ENCODE measurements at regions of chr11 and their contacts with region 1.

Region 1: GRCh38 chr11:130069684-130070108 is at the start of gene APLP2:
- DNase-seq: peak; percentile 92
- ATAC-seq: peak; percentile 94
- H3K4me3 Mint-ChIP-seq: peak within 1 kb of the TSS; percentile 92
- H3K27ac Mint-ChIP-seq: peak within 1 kb of the TSS; percentile 83
- H3K4me1 Mint-ChIP-seq: peaks cover 36% of the 10 kb centered on the region
- H3K27me3 Mint-ChIP-seq: peaks cover 8% of the 10 kb centered on the region
- CTCF ChIP-seq: no peak
- total RNA-seq, gene APLP2: 47.7 and 50.8 TPM in 2 replicates

Region 2: DNA sequence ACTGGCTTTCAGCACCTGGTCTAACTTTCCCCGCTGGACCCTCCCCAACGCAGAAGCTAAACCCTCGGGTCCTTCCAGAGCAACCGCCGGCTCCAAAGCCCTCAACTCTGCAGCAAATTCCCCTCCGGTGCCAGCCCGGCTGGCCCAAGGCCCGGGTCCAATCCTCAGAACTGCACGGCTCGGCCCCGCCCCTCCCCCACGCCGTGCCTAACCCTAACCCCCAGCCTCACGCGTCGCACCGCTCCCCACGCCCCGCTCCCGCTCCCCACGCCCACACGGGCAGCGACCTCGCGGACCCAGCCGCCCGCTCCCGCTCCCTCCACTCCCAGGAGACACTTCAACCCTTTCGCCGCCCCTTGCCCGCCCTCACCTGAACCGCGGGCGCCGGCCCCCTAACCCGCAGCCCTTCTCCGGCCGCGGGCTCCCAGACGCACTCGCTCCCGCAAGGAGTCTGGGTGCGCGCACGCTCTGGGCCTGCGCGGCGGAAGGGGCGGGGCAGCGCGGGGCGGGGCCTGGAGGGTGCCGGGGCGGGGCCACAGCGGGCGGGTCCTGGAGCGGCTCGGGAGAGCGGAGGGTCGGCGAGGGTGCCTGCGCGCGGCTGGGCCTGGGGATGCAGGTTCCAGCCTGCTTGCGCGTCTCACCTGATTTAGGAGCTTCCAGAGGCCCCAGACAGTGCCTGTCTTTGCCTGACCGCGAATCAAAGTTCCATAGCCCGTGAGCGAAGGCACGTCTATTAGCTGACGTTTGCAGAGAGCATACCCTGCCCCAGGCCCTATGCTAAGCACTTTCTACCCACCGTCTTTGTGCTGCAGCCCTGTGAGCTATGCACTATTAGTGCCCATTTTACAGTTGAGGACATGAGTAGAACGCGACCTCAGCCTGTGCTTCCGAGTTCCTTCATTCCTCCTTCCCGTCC is 174.3 kb before region 1 on chr11 and contains the start of gene NFRKB:
- CTCF ChIA-PET with region 1: no interaction called
- POLR2A ChIA-PET with region 1: interaction called, 3 read pairs
- intact Hi-C with region 1: loop called (anchors 1 kb)
- DNase-seq: peak; percentile 92
- ATAC-seq: peak; percentile 97
- H3K4me3 Mint-ChIP-seq: peak within 1 kb of the TSS; percentile 88
- H3K27ac Mint-ChIP-seq: peak within 1 kb of the TSS; percentile 70
- H3K4me1 Mint-ChIP-seq: peaks cover 19% of the 10 kb centered on the region
- H3K27me3 Mint-ChIP-seq: no peaks in the 10 kb centered on the region
- CTCF ChIP-seq: no peak
- total RNA-seq, gene NFRKB: 27.2 and 28.9 TPM in 2 replicates

Region 3: DNA sequence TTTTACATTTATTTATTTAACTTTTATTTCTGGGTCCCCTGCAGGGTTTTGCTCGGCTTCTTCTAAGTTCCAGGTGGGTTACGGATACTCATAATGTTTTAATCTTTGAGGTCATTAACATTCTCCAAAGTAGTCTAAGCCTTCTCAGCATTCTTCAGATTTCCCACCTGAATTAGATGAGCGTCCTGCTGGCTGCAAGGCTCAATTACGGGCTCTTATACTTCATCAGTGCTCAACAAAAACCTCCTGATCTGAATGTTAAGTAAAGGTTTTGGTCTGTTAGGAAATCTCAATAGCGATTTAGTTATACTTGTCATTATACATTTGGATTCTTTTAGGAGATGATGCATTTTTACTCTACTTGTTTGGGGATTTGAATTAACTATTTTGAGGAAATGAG is 147.0 kb before region 1 on chr11:
- CTCF ChIA-PET with region 1: interaction called, 5 read pairs
- POLR2A ChIA-PET with region 1: interaction called, 3 read pairs
- intact Hi-C with region 1: loop called (anchors 1 kb)
- DNase-seq: no peak
- ATAC-seq: no peak
- H3K4me3 Mint-ChIP-seq: no peak overlapping the region
- H3K27ac Mint-ChIP-seq: no peak overlapping the region
- H3K4me1 Mint-ChIP-seq: peaks cover 4% of the 10 kb centered on the region
- H3K27me3 Mint-ChIP-seq: no peaks in the 10 kb centered on the region
- CTCF ChIP-seq: no peak

Region 4: GRCh38 chr11:130031945-130032344 is 37.8 kb before region 1 on chr11:
- CTCF ChIA-PET with region 1: no interaction called
- POLR2A ChIA-PET with region 1: no interaction called
- intact Hi-C with region 1: loop called (anchors 5 kb)
- DNase-seq: no peak
- ATAC-seq: no peak
- H3K4me3 Mint-ChIP-seq: no peak overlapping the region
- H3K27ac Mint-ChIP-seq: no peak overlapping the region
- H3K4me1 Mint-ChIP-seq: no peaks in the 10 kb centered on the region
- H3K27me3 Mint-ChIP-seq: peaks cover 26% of the 10 kb centered on the region
- CTCF ChIP-seq: no peak

Region 5: GRCh38 chr11:130118636-130119387 is 49.1 kb after region 1 on chr11:
- CTCF ChIA-PET with region 1: interaction called, 10 read pairs
- POLR2A ChIA-PET with region 1: interaction called, 10 read pairs
- intact Hi-C with region 1: loop called (anchors 1 kb)
- DNase-seq: peak; percentile 26
- ATAC-seq: peak; percentile 69
- H3K4me3 Mint-ChIP-seq: peak overlapping the region; percentile 22
- H3K27ac Mint-ChIP-seq: peak overlapping the region; percentile 75
- H3K4me1 Mint-ChIP-seq: peaks cover 93% of the 10 kb centered on the region
- H3K27me3 Mint-ChIP-seq: no peaks in the 10 kb centered on the region
- CTCF ChIP-seq: no peak

Region 6: DNA sequence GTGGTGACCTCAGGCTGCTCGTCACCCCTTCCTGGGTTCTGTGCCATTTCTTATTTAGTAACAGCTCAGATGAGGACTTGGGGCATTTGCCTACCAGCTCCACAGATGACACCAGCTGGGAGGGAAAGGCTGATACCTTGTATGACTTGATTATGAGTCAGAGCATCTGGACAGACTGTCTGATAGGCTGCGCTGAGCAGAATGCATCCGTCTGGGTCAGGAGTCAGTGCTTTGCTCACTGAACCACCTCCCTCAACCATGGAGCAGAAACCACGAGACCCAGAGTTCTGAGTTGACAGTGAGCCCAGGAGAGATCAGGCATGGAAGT is 96.7 kb after region 1 on chr11:
- CTCF ChIA-PET with region 1: no interaction called
- POLR2A ChIA-PET with region 1: no interaction called
- intact Hi-C with region 1: loop called (anchors 2 kb)
- DNase-seq: peak; percentile 48
- ATAC-seq: peak; percentile 87
- H3K4me3 Mint-ChIP-seq: peak overlapping the region; percentile 66
- H3K27ac Mint-ChIP-seq: peak overlapping the region; percentile 93
- H3K4me1 Mint-ChIP-seq: peaks cover 84% of the 10 kb centered on the region
- H3K27me3 Mint-ChIP-seq: no peaks in the 10 kb centered on the region
- CTCF ChIP-seq: no peak

Region 7: DNA sequence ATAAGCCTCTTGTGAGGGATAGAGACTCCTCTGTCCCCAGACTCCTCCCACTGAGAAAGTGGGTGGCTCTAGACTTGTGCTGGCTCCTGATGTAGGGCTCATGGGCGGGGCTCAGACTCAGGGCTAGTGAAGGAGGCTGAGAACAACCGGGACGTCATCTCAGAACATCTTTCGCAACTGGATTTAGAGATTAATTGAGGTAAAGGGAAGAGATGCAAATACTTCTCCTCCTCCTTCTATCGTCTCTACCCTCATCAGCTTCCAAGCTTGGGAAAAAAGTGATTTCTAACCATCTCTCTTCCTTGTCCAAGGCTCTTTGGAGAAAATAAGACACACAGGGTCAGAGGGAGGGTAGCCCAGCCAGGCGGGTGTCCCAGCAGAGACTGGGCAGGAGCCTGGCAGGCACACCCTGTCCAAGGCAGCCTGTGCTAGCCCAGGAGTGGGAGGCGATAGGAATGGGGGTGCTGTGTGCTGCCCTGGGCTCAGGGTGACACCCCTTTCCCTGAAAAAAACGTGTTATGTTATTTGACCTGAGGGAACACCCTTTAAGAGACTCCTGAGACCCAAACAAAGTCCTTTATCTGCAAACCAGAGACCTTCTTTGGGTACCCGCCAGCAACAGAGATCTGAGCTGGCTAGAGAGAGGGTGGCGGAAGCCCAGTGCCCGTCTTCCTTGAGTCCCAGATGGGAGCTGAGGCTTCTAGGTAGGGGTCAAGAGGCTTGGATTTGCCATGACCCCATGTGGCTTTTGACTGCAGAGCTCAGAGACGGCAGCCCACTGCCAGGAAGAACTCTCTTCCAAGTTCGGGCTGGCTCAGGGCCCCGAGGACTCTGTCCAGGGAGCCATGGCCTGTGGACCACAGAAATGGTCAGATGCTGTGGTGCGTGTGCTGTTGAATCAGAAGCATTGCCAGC is 539.7 kb after region 1 on chr11:
- CTCF ChIA-PET with region 1: no interaction called
- POLR2A ChIA-PET with region 1: no interaction called
- intact Hi-C with region 1: no loop called
- DNase-seq: no peak
- ATAC-seq: no peak
- H3K4me3 Mint-ChIP-seq: no peak overlapping the region
- H3K27ac Mint-ChIP-seq: no peak overlapping the region
- H3K4me1 Mint-ChIP-seq: no peaks in the 10 kb centered on the region
- H3K27me3 Mint-ChIP-seq: peaks cover 3% of the 10 kb centered on the region
- CTCF ChIP-seq: no peak

Region 8: DNA sequence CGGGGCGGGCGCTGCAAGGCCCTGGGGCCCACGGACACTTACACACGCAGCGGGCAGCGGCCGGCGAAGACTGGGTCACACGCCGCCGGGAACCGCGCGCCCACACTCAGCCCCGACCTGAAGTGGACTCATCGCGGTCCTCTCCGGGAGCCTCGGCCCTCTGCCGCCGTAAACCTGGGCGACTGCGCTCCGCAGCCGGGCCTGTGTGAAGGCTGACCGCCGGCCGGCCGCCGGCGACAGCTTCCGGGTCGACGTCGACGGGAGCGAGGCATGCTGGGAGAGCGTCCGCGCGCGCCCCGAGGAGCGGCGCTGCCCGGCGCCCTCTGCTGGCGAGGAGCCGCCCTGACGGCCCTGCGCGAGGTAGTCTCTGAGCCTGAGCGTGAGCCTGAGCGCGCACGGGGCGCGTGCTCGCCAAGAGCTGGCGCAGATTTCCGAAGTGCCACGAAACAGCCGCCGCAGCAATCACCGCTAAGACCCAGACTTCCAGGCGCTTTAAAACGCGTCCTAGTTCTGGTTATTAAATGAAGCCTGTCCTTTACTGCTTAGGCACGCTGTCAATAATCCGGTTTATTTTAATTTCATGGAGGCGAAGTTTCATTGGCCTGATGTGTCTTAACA is 846.7 kb after region 1 on chr11 and contains the start of gene SNX19:
- CTCF ChIA-PET with region 1: no interaction called
- POLR2A ChIA-PET with region 1: no interaction called
- intact Hi-C with region 1: loop called (anchors 1 kb)
- DNase-seq: peak; percentile 94
- ATAC-seq: peak; percentile 99
- H3K4me3 Mint-ChIP-seq: peak within 1 kb of the TSS; percentile 86
- H3K27ac Mint-ChIP-seq: peak within 1 kb of the TSS; percentile 87
- H3K4me1 Mint-ChIP-seq: peaks cover 37% of the 10 kb centered on the region
- H3K27me3 Mint-ChIP-seq: peaks cover 18% of the 10 kb centered on the region
- CTCF ChIP-seq: peak; percentile 84
- total RNA-seq, gene SNX19: 53.7 and 60.4 TPM in 2 replicates